T-cell (primary cell): ENCODE measurements at regions of chr19 and their contacts with region 1.

Region 1: DNA sequence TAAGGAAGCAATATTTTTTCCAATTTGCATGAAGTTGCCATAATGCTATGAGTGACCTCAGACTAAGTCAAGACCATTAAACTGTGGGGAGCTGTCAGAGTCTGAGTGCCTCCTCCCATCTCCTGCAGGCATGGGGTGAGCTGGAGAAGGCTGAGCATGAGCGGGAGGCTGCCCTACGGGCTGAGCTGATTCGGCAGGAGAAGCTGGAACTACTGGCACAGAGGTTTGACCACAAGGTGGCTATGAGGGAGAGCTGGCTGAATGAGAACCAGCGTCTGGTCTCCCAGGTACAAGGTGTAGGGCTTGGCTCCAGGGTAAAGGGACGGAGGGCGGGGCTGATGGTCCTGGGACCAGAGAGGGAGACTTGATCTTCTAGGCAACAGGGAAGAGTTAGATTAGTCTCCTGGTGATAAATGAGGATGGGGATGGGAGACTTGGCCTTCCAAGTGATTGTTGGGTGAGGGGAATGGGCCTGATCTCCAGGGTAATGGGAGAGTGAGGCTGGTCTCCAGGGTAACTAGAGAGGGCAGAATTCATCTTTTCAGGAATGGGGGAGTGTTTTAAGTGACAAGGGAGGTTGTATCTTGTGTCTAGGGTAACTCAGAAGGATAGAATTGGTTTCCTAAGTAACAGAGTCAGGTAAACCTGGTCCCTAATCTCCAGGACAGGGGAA is 36.0 kb downstream of the SPTBN4 start:
- DNase-seq: no peak
- ATAC-seq: no peak
- H3K4me3 ChIP-seq: no peak overlapping the region
- H3K4me3 Mint-ChIP-seq: no peak overlapping the region
- H3K27ac ChIP-seq: no peak overlapping the region
- H3K27ac Mint-ChIP-seq: no peak overlapping the region
- H3K4me1 ChIP-seq: no peaks in the 10 kb centered on the region
- H3K4me1 Mint-ChIP-seq: peaks cover 0 to 6% (median 0%) of the 10 kb centered on the region in 3 donors
- H3K27me3 ChIP-seq: peaks cover 0 to 38% of the 10 kb centered on the region in 2 experiments
- H3K27me3 Mint-ChIP-seq: peaks cover 6 to 12% of the 10 kb centered on the region in 2 donors

Region 2: GRCh38 chr19:40570313-40571004 is 67.7 kb after region 1 on chr19:
- CTCF ChIA-PET with region 1: no interaction called
- POLR2A ChIA-PET with region 1: no interaction called
- DNase-seq: peak; percentile 85 to 100 (median 95)
- ATAC-seq: peak; percentile 86 to 90 (median 88)
- H3K4me3 ChIP-seq: peak overlapping the region in 1 of 2 donors; percentile 36
- H3K4me3 Mint-ChIP-seq: peak overlapping the region; percentile 53 to 69 (median 68)
- H3K27ac ChIP-seq: no peak overlapping the region
- H3K27ac Mint-ChIP-seq: peak overlapping the region; percentile 77 to 83
- H3K4me1 ChIP-seq: peaks cover 0 to 28% of the 10 kb centered on the region in 2 experiments
- H3K4me1 Mint-ChIP-seq: peaks cover 12 to 23% (median 13%) of the 10 kb centered on the region in 3 donors
- H3K27me3 ChIP-seq: peaks cover 8 to 39% of the 10 kb centered on the region in 2 experiments
- H3K27me3 Mint-ChIP-seq: peaks cover 3 to 23% of the 10 kb centered on the region in 2 donors

Region 3: GRCh38 chr19:40662921-40663694 is 160.3 kb after region 1 on chr19:
- CTCF ChIA-PET with region 1: interaction called in 1 of 2 experiments, 10 read pairs
- POLR2A ChIA-PET with region 1: no interaction called
- DNase-seq: peak; percentile 78 to 96 (median 89)
- ATAC-seq: peak; percentile 85 to 93 (median 88)
- H3K4me3 ChIP-seq: peak overlapping the region; percentile 51 to 67
- H3K4me3 Mint-ChIP-seq: peak overlapping the region; percentile 73 to 84 (median 81)
- H3K27ac ChIP-seq: peak overlapping the region; percentile 68
- H3K27ac Mint-ChIP-seq: peak overlapping the region; percentile 76 to 88
- H3K4me1 ChIP-seq: peaks cover 0 to 18% of the 10 kb centered on the region in 2 experiments
- H3K4me1 Mint-ChIP-seq: peaks cover 5 to 19% (median 18%) of the 10 kb centered on the region in 3 donors
- H3K27me3 ChIP-seq: peaks cover 0 to 7% of the 10 kb centered on the region in 2 experiments
- H3K27me3 Mint-ChIP-seq: no peaks in the 10 kb centered on the region